ENCODE measurements at regions of chr6 and their contacts with region 1.

Region 1: GRCh38 chr6:121399966-121400365 is 35.5 kb upstream of the GJA1 start:
- H3K4me3 ChIP-seq: no peak overlapping the region
- H3K27ac ChIP-seq: no peak overlapping the region
- H3K4me1 ChIP-seq: no peaks in the 10 kb centered on the region
- CTCF ChIP-seq: no peak

Region 2: DNA sequence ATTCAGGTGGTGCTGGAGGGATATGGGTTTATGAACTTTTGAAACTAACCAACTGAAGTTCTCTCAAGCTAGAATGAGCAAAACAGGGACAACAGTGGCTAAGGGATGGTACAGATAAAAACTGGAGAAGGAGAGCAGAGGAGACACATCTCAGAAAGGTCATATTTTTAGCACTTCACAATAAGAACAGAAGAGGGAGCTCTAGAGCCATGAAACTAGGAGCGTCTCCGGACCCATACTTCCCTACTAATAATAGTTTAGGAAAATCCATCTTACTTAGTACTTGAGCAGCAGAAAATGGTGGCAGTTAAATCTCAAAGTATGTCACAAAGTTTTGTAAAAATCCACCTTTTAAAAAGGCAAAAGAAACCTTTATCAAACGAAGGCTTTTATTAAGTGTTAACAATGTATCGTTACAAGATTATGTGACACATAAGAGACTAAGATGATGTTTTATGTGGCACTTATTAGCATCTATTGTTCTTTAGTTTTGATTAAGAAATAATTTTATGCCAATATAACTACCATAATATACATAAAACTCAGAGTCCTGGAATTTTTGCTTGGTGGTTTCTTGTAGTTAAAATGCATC is 344.3 kb before region 1 on chr6:
- CTCF ChIA-PET with region 1: interaction called, 22 read pairs
- POLR2A ChIA-PET with region 1: no interaction called
- H3K4me3 ChIP-seq: no peak overlapping the region
- H3K27ac ChIP-seq: no peak overlapping the region
- H3K4me1 ChIP-seq: no peaks in the 10 kb centered on the region
- CTCF ChIP-seq: peak; percentile 34; the same call in 1 of the 2 replicates

Region 3: GRCh38 chr6:121305957-121306607 is 93.9 kb before region 1 on chr6:
- CTCF ChIA-PET with region 1: interaction called, 25 read pairs
- POLR2A ChIA-PET with region 1: no interaction called
- H3K4me3 ChIP-seq: no peak overlapping the region
- H3K27ac ChIP-seq: no peak overlapping the region
- H3K4me1 ChIP-seq: no peaks in the 10 kb centered on the region
- CTCF ChIP-seq: 0 out of 2 replicates have a peak, but pooled peaks have one; percentile 22

Region 4: DNA sequence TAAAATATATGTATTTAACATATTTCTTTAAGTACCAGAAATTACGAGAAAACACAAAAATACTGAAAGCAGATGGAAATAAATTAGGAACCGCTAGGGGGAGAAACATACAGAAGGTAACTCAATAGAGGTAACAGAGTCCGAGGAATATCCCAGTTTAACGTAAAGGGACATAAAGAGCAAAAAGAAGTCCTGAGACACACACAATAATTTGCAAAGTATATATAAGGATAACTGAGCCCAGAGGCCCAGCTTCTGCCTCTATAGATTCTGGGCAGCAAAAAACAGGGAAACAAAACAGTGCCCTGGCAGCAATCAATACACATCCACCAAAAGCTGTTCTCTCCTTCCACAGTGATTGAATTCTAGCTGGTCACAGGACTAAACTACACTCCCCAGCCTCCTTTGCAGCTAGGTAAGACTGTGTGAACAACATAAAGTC is 80.8 kb before region 1 on chr6:
- CTCF ChIA-PET with region 1: interaction called, 52 read pairs
- POLR2A ChIA-PET with region 1: no interaction called
- H3K4me3 ChIP-seq: peak overlapping the region; percentile 2; the same call in 1 of the 2 replicates
- H3K27ac ChIP-seq: no peak overlapping the region
- H3K4me1 ChIP-seq: no peaks in the 10 kb centered on the region
- CTCF ChIP-seq: no peak

Region 5: GRCh38 chr6:121354764-121355163 is 45.2 kb before region 1 on chr6:
- CTCF ChIA-PET with region 1: interaction called, 13 read pairs
- POLR2A ChIA-PET with region 1: no interaction called
- H3K4me3 ChIP-seq: no peak overlapping the region
- H3K27ac ChIP-seq: no peak overlapping the region
- H3K4me1 ChIP-seq: no peaks in the 10 kb centered on the region
- CTCF ChIP-seq: no peak

Region 6: GRCh38 chr6:121498481-121499276 is 98.7 kb after region 1 on chr6:
- CTCF ChIA-PET with region 1: no interaction called
- POLR2A ChIA-PET with region 1: no interaction called
- H3K4me3 ChIP-seq: no peak overlapping the region
- H3K27ac ChIP-seq: no peak overlapping the region
- H3K4me1 ChIP-seq: no peaks in the 10 kb centered on the region
- CTCF ChIP-seq: no peak